ENCODE measurements at regions of chr2 and their contacts with region 1.

Region 1: GRCh38 chr2:152635635-152636298 is 81.5 kb downstream of the PRPF40A start:
- DNase-seq: peak in 1 of 2 donors; percentile 50
- ATAC-seq: peak in 7 of 8 donors; percentile 58 to 72 (median 61)
- H3K4me3 ChIP-seq: no peak overlapping the region
- H3K27ac ChIP-seq: no peak overlapping the region
- H3K4me1 ChIP-seq: peaks cover 0 to 4% (median 0%) of the 10 kb centered on the region in 9 donors
- H3K27me3 ChIP-seq: no peaks in the 10 kb centered on the region
- CTCF ChIP-seq: peak; percentile 80 to 90 (median 83)

Region 2: DNA sequence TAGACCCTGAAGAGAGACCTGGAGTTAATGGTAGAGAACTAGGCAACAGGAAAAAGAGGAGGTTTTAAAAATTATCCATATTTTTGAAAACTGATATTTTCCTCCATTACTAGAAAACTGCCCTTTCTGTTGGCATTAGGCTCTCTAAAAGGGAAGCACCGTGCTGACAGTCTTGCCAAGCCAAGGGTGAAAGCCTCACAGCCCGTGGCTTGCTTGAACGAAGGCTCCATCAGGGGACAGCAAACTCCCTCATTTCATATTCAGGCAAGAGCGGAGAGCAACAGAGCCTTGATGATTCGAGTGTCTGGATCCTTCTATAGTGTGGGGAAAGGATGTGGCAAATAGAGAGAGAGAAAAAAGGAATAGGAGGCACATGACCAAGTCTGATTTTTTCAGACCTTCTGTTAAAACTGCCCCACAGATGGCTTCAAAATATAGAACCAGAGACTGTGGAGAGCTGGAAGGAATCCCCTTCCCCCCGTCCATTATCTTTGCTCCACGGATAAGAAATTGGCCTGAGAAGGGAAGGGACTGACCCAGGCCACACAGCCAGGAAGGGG is 603.9 kb before region 1 on chr2:
- intact Hi-C with region 1: loop called in 9 of 10 experiments (anchors 2 to 10 kb)
- DNase-seq: no peak
- ATAC-seq: peak in 1 of 8 donors; percentile 21
- H3K4me3 ChIP-seq: no peak overlapping the region
- H3K27ac ChIP-seq: peak overlapping the region in 1 of 10 donors; percentile 40
- H3K4me1 ChIP-seq: peaks cover 0 to 9% (median under 1%) of the 10 kb centered on the region in 9 donors
- H3K27me3 ChIP-seq: no peaks in the 10 kb centered on the region
- CTCF ChIP-seq: no peak

Region 3: GRCh38 chr2:152036611-152037469 is 598.9 kb before region 1 on chr2:
- intact Hi-C with region 1: loop called (anchors 2 to 10 kb)
- DNase-seq: peak; percentile 33 to 70
- ATAC-seq: peak in 7 of 8 donors; percentile 61 to 81 (median 70)
- H3K4me3 ChIP-seq: no peak overlapping the region
- H3K27ac ChIP-seq: no peak overlapping the region
- H3K4me1 ChIP-seq: peaks cover 4 to 31% (median 24%) of the 10 kb centered on the region in 9 donors
- H3K27me3 ChIP-seq: no peaks in the 10 kb centered on the region
- CTCF ChIP-seq: peak; percentile 56 to 93 (median 84)

Region 4: DNA sequence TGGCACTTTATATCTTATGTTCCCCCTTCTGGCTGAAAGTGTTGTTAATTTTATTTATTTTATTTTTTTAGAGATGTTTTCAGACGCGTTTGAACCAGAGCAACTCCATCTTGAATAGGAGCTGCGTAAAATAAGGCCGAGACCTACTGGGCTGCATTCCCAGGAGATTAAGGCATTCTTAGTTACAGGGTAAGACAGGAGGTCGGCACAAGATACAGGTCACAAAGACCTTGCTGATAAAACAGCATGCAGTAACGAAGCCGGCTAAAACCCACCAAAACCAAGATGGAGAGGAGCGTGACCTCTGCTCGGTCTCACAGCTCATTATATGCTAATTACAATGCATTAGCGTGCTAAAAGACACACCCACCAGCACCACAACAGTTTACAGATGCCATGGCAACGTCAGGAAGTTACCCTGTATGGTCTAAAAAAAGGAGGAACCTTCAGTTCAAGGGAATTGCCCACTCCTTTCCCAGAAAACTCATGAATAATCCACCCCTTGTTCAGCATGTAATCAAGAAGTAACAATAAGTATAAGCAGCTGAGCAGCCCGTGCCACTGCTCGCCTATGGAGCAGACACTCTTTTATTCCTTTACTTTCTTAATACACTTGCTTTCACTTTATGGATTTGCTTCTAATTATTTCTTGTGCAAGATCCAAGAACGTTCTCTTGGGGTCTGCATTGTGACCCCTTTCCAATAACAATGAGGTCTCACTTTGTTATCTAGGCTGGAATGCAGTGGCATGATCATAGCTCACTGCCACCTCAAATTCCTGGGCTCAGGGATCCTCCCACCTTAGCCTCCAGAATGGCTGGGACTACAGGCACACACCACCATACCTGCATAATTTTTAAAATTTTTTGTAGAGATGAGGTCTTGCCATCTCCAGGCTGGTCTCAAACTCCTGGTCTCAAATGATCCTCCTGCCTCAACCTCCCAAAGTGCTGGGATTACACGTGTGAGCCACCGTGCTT is 592.8 kb before region 1 on chr2:
- intact Hi-C with region 1: loop called in 8 of 10 experiments (anchors 5 to 10 kb)
- DNase-seq: no peak
- ATAC-seq: no peak
- H3K4me3 ChIP-seq: no peak overlapping the region
- H3K27ac ChIP-seq: no peak overlapping the region
- H3K4me1 ChIP-seq: peaks cover 0 to 20% (median 14%) of the 10 kb centered on the region in 9 donors
- H3K27me3 ChIP-seq: no peaks in the 10 kb centered on the region
- CTCF ChIP-seq: no peak

Region 5: DNA sequence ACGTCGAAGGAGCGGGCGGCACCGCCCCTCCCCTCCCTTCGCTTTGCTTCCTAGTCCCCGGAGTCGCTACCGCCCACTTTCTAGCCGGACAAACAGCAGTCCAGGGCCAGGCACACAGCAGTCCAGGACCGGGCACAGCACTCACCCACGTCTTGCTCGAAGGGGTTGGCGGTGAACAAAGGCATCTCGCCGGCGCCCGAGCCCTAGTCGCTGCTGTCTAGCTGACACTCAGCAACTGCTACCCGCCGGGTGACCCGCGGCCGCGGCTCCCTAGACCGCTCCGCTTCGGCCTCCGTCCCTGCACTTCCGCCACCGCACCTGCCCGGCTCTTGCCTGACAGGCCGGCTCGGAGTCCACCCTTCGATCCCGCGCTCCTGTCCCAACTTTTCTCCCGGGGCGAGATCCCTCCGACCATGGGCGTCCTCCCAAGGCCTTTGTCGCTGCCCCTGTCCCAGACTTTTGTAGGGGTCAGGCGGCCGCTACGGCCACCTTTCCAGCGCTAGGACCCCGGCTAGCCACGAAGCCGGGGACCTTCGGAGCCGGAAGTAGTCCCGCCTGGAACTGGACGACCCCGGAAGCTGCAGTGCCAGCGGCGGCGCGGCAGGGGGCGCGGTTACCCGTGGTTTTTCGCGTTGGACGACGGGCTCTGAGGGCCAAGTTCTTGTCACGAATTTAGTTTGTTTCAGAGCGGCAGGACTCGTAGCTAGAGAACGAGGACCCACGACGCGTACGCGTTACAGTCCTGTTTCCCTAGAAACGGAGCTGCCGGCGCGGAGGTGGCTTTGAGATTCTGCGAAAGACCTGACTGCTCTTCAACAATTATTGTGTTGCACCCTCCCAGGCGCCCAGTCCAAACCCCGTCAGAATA is 460.1 kb before region 1 on chr2 and contains the start of gene STAM2:
- intact Hi-C with region 1: loop called in 3 of 10 experiments (anchors 5 kb)
- DNase-seq: peak; percentile 92 to 95
- ATAC-seq: peak; percentile 91 to 98 (median 96)
- H3K4me3 ChIP-seq: peak within 1 kb of the TSS; percentile 56 to 98 (median 76)
- H3K27ac ChIP-seq: peak within 1 kb of the TSS; percentile 92 to 99 (median 96)
- H3K4me1 ChIP-seq: peaks cover 2 to 46% (median 31%) of the 10 kb centered on the region in 9 donors
- H3K27me3 ChIP-seq: no peaks in the 10 kb centered on the region
- CTCF ChIP-seq: peak; percentile 87 to 99 (median 97)
- total RNA-seq, gene STAM2: 22.4 to 35.9 (median 27.2) TPM

Region 6: DNA sequence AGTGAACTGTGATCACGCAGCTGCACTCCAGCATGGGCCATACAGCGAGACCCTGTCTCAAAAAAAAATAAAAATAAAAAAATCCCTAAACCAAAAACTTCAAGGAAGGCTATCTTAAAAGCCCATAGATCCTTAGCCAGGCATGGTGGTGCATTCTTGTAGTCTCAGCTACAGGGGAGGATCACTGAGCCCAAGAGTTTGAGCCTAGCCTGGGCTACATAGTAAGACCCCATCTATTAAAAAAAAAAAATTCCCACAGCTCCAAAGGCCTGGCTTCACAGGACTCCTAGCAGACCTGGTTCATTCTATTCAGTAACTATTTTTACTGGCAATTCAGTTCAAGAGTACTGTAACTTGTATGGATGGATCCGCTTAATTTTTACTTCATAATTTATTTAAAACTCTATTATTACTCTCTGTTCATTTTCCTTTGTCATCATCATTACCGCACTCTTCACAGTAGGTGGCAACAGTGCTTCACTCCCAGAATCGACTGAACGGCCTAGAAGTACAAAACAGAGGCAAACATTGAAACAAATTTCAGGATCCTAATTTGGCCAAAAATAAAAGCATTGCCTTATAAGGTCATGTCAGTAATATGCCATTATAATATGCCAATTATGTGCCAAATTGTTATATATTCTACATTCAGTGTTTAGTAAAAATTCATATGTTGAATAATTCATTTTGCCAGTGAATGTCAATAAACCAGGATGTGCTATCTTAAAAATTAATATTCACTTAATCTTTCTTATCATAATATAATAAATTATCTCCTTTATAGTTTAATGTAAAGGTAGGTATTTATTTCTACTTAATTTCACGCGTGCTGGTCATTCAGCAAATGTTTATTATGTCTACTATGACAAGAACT is 445.9 kb before region 1 on chr2:
- intact Hi-C with region 1: loop called in 7 of 10 experiments (anchors 1 to 5 kb)
- DNase-seq: peak in 1 of 2 donors; percentile 36
- ATAC-seq: peak in 7 of 8 donors; percentile 61 to 88 (median 82)
- H3K4me3 ChIP-seq: no peak overlapping the region
- H3K27ac ChIP-seq: no peak overlapping the region
- H3K4me1 ChIP-seq: no peaks in the 10 kb centered on the region
- H3K27me3 ChIP-seq: peaks cover 0 to 11% (median 0%) of the 10 kb centered on the region in 7 donors
- CTCF ChIP-seq: peak; percentile 56 to 92 (median 84)

Region 7: GRCh38 chr2:152542995-152543481 is 92.7 kb before region 1 on chr2:
- intact Hi-C with region 1: no loop called
- DNase-seq: no peak
- ATAC-seq: peak in 7 of 8 donors; percentile 7 to 71 (median 52)
- H3K4me3 ChIP-seq: no peak overlapping the region
- H3K27ac ChIP-seq: peak overlapping the region in 7 of 10 donors; percentile 13 to 55 (median 33)
- H3K4me1 ChIP-seq: peaks cover 0 to 49% (median 18%) of the 10 kb centered on the region in 9 donors
- H3K27me3 ChIP-seq: no peaks in the 10 kb centered on the region
- CTCF ChIP-seq: no peak